ENCODE measurements at regions of chr18 and their contacts with region 1.

Region 1: GRCh38 chr18:35695803-35696202 is 114.3 kb downstream of the GALNT1 start:
- DNase-seq: peak; percentile 69 to 77
- ATAC-seq: peak; percentile 83 to 98 (median 95)
- H3K4me3 ChIP-seq: no peak overlapping the region
- H3K27ac ChIP-seq: peak overlapping the region in 8 of 10 donors; percentile 49 to 72 (median 61)
- H3K4me1 ChIP-seq: peaks cover 0 to 28% (median 19%) of the 10 kb centered on the region in 9 donors
- H3K27me3 ChIP-seq: no peaks in the 10 kb centered on the region
- CTCF ChIP-seq: no peak

Region 2: DNA sequence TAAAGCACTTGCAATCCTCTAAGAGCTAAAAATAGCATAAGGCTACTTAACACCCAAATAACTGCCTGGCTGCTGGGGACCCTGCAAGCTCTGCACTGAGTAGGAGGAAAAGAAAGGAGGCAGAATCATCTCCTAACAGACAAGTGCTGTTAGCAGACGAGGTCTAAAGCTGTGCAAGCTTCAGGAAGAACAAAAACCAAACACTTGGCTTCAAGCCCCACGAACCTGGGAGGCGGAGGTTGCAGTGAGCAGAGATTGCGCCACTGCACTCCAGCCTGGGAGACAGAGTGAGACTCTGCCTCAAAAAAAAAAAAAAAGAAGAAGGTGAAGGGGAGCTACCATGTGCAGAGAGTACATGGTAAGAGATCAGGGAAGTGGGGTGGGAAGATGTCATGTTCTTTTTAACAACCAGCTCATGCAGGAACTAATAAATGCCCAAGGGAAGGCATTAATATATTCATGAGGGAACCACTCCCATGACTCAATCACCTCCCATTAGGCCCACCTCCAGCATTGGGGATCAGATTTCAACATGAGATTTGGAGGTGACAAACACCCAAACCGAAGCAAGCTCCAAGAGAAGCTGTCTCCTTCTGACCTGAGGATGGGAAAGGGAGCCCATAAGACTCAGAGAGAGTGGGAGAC is 169.2 kb before region 1 on chr18:
- intact Hi-C with region 1: loop called in 1 of 10 experiments (anchors 10 kb)
- DNase-seq: no peak
- ATAC-seq: peak; percentile 17 to 65 (median 52)
- H3K4me3 ChIP-seq: peak overlapping the region in 5 of 10 donors; percentile 1 to 27 (median 16)
- H3K27ac ChIP-seq: peak overlapping the region in 6 of 10 donors; percentile 16 to 64 (median 24)
- H3K4me1 ChIP-seq: peaks cover 7 to 47% (median 24%) of the 10 kb centered on the region in 9 donors
- H3K27me3 ChIP-seq: no peaks in the 10 kb centered on the region
- CTCF ChIP-seq: no peak

Region 3: GRCh38 chr18:35635170-35635569 is 60.6 kb before region 1 on chr18:
- intact Hi-C with region 1: no loop called
- DNase-seq: no peak
- ATAC-seq: peak in 1 of 8 donors; percentile 20
- H3K4me3 ChIP-seq: no peak overlapping the region
- H3K27ac ChIP-seq: peak overlapping the region in 1 of 10 donors; percentile 16
- H3K4me1 ChIP-seq: peaks cover 0 to 12% (median 5%) of the 10 kb centered on the region in 9 donors
- H3K27me3 ChIP-seq: no peaks in the 10 kb centered on the region
- CTCF ChIP-seq: no peak

Region 4: GRCh38 chr18:36035253-36035652 is 339.4 kb after region 1 on chr18:
- intact Hi-C with region 1: no loop called
- DNase-seq: no peak
- ATAC-seq: peak in 1 of 8 donors; percentile 19
- H3K4me3 ChIP-seq: no peak overlapping the region
- H3K27ac ChIP-seq: no peak overlapping the region
- H3K4me1 ChIP-seq: peaks cover 0 to 48% (median 22%) of the 10 kb centered on the region in 9 donors
- H3K27me3 ChIP-seq: no peaks in the 10 kb centered on the region
- CTCF ChIP-seq: no peak